ENCODE measurements at regions of chr12 and their contacts with region 1.

Region 1: GRCh38 chr12:67671382-67671781 is 22.8 kb downstream of the DYRK2 start:
- DNase-seq: peak; percentile 77
- ATAC-seq: no peak; the same call in 1 of the 2 replicates
- H3K4me3 ChIP-seq: no peak overlapping the region
- H3K27ac ChIP-seq: no peak overlapping the region
- H3K4me1 ChIP-seq: peaks cover 1% of the 10 kb centered on the region; the same call in 1 of the 2 replicates
- H3K27me3 ChIP-seq: no peaks in the 10 kb centered on the region
- CTCF ChIP-seq: no peak
- POLR2A ChIP-seq: no peak
- RAD21 ChIP-seq: no peak

Region 2: GRCh38 chr12:67742461-67742860 is 71.1 kb after region 1 on chr12:
- CTCF ChIA-PET with region 1: no interaction called
- POLR2A ChIA-PET with region 1: no interaction called
- dilution Hi-C with region 1: no loop called
- in situ Hi-C with region 1: no loop called
- intact Hi-C with region 1: loop called (anchors 2 kb)
- DNase-seq: peak; percentile 55
- ATAC-seq: peak; percentile 35
- H3K4me3 ChIP-seq: no peak overlapping the region
- H3K27ac ChIP-seq: no peak overlapping the region
- H3K4me1 ChIP-seq: peaks cover 4% of the 10 kb centered on the region
- H3K27me3 ChIP-seq: no peaks in the 10 kb centered on the region
- CTCF ChIP-seq: no peak
- POLR2A ChIP-seq: no peak
- RAD21 ChIP-seq: no peak